Dorsolateral prefrontal cortex (tissue), 120 donors: ENCODE measurements at regions of chr9 and their contacts with region 1.

Region 1: DNA sequence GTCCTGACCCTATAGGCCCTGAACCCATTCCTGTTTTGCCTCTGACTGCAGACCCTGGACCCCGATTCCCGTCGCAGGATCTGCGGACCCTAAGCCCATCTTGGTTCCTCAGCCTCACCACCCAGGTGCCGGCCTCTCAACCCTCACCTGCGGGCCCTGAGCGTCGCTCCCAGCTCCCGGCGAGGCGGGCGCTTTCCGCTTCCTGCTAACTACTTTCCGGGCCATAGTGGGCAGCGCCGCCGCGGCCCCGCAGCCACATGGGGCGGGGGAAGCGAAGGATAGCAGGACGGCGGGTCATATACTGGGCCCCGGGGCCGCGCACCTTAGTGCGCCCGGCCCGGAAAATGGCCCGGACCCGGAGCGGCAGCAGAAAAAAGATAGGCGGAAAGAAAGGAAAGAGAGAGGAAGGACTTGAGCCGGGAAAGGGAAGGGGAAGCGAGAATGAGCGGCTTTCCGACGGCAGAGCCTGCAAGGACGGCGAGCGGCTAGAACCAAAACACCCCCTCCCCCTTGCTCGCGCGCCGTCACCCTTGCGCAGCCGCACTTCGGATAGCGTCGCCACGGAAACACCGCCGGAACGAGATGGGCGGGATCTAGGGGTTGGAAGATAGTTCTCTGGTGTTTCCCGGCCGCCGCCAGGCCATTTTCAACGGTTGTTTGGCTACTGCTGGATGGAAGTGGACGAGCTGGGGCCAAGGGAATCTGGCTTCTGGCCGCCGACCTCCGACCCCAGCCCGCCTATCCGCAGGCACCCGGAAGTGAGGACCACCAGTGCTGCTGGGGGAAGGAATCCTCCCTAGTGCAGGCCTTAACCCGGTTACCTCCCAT is at the start of gene DCAF12:
- DNase-seq: peak; percentile 76 to 91 (median 87)
- H3K4me3 ChIP-seq: peak within 1 kb of the TSS; percentile 58 to 100 (median 93)
- H3K27ac ChIP-seq: peak within 1 kb of the TSS; percentile 64 to 98 (median 91)
- H3K27me3 ChIP-seq: no peaks in the 10 kb centered on the region
- CTCF ChIP-seq: peak in 38 of 56 donors; percentile 7 to 56 (median 28)
- total RNA-seq, gene DCAF12: 13.2 to 29.5 (median 19.8) TPM

Region 2: DNA sequence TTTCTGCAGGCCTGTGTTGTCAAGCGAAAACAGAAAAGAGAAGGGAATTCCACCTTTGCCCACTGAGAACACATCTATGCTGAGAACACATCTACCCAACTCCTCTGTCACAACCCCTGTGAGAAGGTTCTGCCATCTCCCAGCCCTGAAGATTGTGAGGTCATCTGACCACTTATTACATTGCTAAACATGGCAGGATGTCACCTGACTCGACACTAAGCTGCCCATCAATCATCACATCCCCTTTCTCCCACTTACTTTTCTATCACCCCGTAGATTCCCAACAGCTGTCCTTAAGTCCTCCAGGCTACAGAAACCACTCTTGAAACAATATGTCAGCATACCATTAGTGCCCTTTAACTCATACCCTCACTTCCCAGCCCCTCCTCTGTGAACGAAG is 395.3 kb before region 1 on chr9:
- intact Hi-C with region 1: no loop called
- DNase-seq: no peak
- H3K4me3 ChIP-seq: no peak overlapping the region
- H3K27ac ChIP-seq: no peak overlapping the region
- H3K27me3 ChIP-seq: peaks cover 0 to 4% (median 0%) of the 10 kb centered on the region in 45 donors
- CTCF ChIP-seq: no peak

Region 3: GRCh38 chr9:34048923-34049697 is 77.3 kb before region 1 on chr9:
- intact Hi-C with region 1: loop called (anchors 1 to 2 kb)
- DNase-seq: peak; percentile 98 to 99 (median 98)
- H3K4me3 ChIP-seq: peak overlapping the region; percentile 71 to 100 (median 98)
- H3K27ac ChIP-seq: peak overlapping the region; percentile 67 to 100 (median 97)
- H3K27me3 ChIP-seq: no peaks in the 10 kb centered on the region
- CTCF ChIP-seq: peak in 36 of 56 donors; percentile 7 to 62 (median 25)

Region 4: DNA sequence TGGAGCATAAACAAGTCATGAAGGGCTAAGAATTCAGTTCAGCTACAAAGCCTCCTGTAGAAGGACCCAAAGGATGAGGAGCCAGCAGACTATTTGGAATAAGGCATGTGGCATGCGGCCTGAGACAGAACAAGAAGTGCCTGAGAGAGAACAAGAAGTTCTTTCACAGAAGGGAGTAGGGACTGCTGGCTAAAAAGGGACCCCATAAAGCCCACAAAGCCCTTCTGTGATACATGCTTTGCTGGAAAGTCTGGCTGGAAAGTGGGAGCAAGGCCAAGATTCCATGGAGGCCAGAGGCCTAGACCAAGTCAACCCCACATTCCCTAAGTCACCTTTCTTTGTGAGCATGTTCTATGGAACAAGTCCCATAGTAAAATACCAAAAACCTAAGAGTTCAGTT is 41.9 kb before region 1 on chr9:
- intact Hi-C with region 1: loop called in 1 of 2 experiments (anchors 5 kb)
- DNase-seq: peak in 9 of 10 donors; percentile 9 to 71 (median 53)
- H3K4me3 ChIP-seq: no peak overlapping the region
- H3K27ac ChIP-seq: peak overlapping the region in 58 of 59 donors; percentile 45 to 95 (median 84)
- H3K27me3 ChIP-seq: no peaks in the 10 kb centered on the region
- CTCF ChIP-seq: no peak

Region 5: DNA sequence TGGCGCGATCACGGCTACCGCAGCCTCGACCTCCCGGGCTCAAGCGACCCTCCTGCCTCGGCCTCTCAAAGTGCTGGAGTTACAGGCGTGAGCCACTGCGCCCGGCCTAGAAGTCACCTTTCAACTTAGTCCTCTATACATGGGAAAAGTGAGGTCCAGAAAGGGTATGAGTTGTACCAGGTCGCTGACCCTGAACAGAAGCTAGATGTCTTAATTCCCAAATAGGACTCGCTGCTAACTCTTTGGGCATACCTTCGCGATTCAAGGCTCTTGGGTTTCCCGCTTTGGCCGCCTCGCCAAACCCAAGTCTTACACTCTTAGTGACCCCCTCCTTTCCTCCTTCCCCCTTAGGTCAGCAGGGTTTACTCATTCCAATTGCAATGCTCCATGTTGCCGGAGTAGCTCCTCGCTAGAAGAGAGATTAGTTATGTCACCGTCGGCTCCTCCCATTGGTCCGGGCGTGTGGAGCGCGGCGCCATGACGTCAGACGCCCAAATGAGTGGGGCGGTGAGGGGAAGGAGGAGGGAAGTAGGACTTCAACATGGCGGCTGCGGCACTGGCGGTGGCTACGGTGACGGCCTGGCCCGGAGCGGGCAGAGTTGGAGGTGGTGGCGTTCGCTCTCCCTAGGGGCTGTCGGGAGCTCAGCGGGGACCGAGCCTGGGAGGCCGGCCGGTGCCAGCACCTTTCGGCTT is 52.2 kb after region 1 on chr9 and contains the start of gene UBAP1:
- intact Hi-C with region 1: loop called in 1 of 2 experiments (anchors 1 kb)
- DNase-seq: peak; percentile 91 to 98 (median 97)
- H3K4me3 ChIP-seq: peak within 1 kb of the TSS; percentile 57 to 98 (median 83)
- H3K27ac ChIP-seq: peak within 1 kb of the TSS; percentile 26 to 97 (median 91)
- H3K27me3 ChIP-seq: no peaks in the 10 kb centered on the region
- CTCF ChIP-seq: peak in 31 of 56 donors; percentile 3 to 40 (median 23)
- total RNA-seq, gene UBAP1: 48.3 to 81.3 (median 63.1) TPM

Region 6: DNA sequence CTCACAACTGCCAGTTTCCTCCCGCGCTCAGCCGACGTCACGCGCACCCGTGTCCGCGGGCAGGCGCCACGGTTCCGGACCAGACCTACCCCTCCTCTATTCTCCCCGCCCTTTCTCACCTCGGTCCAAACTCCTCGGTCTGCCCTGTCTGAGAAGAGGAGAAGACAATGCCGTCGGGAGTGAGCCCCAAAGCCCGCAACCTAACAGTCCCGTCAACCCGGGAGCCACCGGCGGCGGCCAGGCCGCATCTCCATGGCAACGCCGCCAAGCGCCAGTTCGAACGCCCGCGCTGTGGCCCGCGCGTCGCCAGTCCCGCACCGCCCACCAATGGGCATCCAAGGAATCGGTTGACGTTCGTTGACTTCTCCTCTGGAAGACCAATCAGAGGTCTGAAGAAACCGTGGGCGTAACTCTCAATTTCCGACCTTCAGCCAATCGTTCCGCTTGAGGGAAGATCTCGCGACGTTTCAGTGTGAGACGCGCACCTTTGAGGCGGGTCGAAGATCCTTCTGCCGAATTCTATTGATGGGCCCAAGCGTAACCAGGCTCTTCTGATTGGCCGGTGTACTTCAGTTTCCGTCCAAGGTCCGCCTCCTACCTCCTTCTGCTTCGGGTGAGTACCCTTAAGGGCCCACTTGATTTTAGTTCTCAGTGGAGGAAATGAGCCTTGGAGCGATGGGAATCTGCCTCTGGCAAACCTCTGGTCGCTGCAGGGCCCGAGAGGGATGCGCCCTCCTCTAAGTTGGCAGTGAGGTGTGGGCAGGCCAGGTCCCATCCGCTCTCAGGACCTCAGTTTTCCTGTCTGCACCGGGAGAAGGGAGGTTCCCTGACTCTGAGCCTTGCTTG is 202.8 kb after region 1 on chr9 and contains the starts of genes KIF24 and NUDT2:
- intact Hi-C with region 1: loop called in 1 of 2 experiments (anchors 5 kb)
- DNase-seq: peak; percentile 95 to 99 (median 98)
- H3K4me3 ChIP-seq: peak within 1 kb of the TSS; percentile 60 to 99 (median 85)
- H3K27ac ChIP-seq: peak within 1 kb of the TSS; percentile 80 to 98 (median 93)
- H3K27me3 ChIP-seq: no peaks in the 10 kb centered on the region
- CTCF ChIP-seq: peak in 29 of 56 donors; percentile 4 to 51 (median 19)
- total RNA-seq, gene KIF24: 0.61 to 3.8 (median 1.6) TPM
- total RNA-seq, gene NUDT2: 9.9 to 32.0 (median 20.6) TPM